Ascending aorta (tissue), 2 donors: ENCODE measurements at regions of chr17 and their contacts with region 1.

Region 1: DNA sequence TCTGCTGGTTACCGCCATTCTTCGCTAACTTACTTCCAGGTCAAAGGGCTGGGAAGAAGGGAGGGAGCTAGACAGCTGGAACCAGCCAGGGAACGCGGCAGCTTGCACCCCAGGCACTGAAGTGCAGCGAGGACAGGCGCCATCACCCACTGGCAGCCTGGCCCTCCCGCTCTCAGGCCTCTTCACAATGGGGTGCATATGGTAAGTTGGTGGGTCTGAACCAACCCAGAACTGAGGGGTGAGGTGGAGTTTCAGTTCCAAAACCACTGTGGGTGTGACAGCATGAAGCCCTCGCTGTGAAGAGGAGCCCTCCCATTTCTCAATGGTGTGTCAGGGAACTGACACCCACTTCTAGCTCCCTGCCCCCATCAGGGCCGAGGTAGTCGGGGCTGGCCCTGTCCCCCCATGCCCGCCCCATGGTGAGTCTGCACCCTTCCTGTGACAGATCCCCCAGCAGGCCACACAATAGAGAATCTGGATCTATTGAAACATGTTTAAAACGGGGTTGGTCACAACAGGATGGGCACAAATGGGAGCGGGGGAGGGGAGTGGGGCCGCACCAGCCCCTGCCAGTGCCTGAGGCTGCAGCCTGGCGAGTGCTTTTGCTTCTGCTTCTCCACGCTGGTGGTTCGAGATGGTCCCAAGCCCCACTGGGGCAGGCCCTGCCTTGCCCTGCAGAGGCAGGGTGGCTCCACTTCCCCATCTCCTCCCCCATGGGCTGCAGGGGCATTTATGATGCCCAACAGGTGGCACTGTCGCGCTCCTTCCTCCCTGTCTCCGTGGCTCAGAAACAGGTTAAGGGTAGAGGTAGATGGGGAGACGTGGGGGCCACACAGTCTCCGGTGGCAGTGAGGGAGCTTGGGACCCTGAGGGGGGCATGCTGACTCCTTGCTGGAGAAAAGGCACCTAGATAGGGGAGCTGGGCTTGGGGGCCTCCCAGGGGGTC is 2.3 kb downstream of the LIMD2 start:
- DNase-seq: peak in 1 of 2 donors; percentile 76
- H3K4me3 ChIP-seq: peak overlapping the region in 1 of 2 donors; percentile 73
- H3K27ac ChIP-seq: peak overlapping the region; percentile 54 to 80
- H3K4me1 ChIP-seq: peaks cover 6 to 9% of the 10 kb centered on the region in 2 donors
- H3K27me3 ChIP-seq: no peaks in the 10 kb centered on the region
- CTCF ChIP-seq: peak in 2 of 3 experiments; percentile 45

Region 2: GRCh38 chr17:63600569-63601438 is 96.8 kb before region 1 on chr17 and contains the start of gene TACO1:
- intact Hi-C with region 1: no loop called
- DNase-seq: peak in 1 of 2 donors; percentile 87
- H3K4me3 ChIP-seq: peak within 1 kb of the TSS; percentile 87 to 95
- H3K27ac ChIP-seq: peak within 1 kb of the TSS; percentile 79 to 91
- H3K4me1 ChIP-seq: peaks cover 3 to 9% of the 10 kb centered on the region in 2 donors
- H3K27me3 ChIP-seq: no peaks in the 10 kb centered on the region
- CTCF ChIP-seq: no peak
- total RNA-seq, gene TACO1: 6.2 TPM

Region 3: GRCh38 chr17:63675607-63676413 is 21.8 kb before region 1 on chr17:
- intact Hi-C with region 1: loop called (anchors 2 kb)
- DNase-seq: peak in 1 of 2 donors; percentile 94
- H3K4me3 ChIP-seq: peak overlapping the region; percentile 23 to 37
- H3K27ac ChIP-seq: peak overlapping the region; percentile 80 to 81
- H3K4me1 ChIP-seq: peaks cover 9 to 26% of the 10 kb centered on the region in 2 donors
- H3K27me3 ChIP-seq: no peaks in the 10 kb centered on the region
- CTCF ChIP-seq: no peak

Region 4: DNA sequence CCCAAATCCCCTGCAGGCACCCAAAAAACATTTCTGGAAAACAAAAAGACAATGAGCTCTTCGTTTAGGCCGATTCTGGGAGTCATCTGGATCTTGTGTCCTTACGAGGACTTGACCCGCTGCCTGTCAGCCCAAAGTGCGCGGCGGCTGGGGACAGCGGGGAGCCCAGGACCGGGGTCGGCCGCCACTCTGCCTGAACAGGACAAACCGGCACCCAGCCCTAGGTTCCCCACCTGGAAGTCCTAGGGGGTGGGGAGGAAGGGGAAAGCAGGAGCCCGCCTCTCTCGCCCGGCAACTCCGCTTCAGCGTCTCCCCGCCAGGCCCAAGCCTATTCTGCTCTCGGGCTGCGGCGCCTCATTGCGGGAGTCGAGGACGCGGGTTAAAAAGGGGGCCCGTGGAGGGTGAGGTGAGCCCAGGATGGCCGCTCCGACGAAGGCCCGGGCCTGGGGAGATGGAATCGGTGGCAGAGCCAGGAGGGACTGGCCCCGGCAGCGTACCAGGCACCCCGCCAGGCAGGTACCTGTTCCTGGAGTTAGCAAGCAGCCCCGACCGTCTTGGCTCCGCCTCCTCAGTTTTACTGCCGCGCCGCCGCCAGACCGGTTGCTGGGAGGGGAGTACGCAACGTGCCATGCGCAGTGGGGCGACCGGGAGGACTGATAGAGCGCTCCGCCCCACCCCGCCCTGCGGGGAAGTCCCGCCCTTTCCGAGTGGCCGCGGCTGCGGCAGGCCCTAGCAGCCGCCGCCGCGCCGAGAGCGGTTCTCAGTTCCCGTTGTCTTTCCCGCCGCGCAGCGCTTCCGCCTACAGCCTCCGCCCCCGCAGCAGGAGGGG is 43.8 kb after region 1 on chr17 and contains the start of gene STRADA:
- intact Hi-C with region 1: loop called (anchors 2 kb)
- DNase-seq: peak; percentile 94 to 99
- H3K4me3 ChIP-seq: peak within 1 kb of the TSS; percentile 84 to 90
- H3K27ac ChIP-seq: peak within 1 kb of the TSS; percentile 91 to 94
- H3K4me1 ChIP-seq: peaks cover 0 to 10% of the 10 kb centered on the region in 2 donors
- H3K27me3 ChIP-seq: no peaks in the 10 kb centered on the region
- CTCF ChIP-seq: no peak
- total RNA-seq, gene STRADA: 3.2 TPM

Region 5: GRCh38 chr17:63762161-63763078 is 64.8 kb after region 1 on chr17:
- intact Hi-C with region 1: no loop called
- DNase-seq: no peak
- H3K4me3 ChIP-seq: no peak overlapping the region
- H3K27ac ChIP-seq: no peak overlapping the region
- H3K4me1 ChIP-seq: no peaks in the 10 kb centered on the region
- H3K27me3 ChIP-seq: no peaks in the 10 kb centered on the region
- CTCF ChIP-seq: no peak